K562 (cell line): ENCODE measurements at regions of chr15 and their contacts with region 1.

Region 1: GRCh38 chr15:90054618-90055097 is 47.6 kb downstream of the IDH2 start:
- DNase-seq: no peak
- ATAC-seq: no peak
- H3K4me3 ChIP-seq: no peak overlapping the region
- H3K27ac ChIP-seq: no peak overlapping the region
- H3K4me1 ChIP-seq: peaks cover 22 to 24% of the 10 kb centered on the region in 2 experiments
- H3K27me3 ChIP-seq: no peaks in the 10 kb centered on the region
- CTCF ChIP-seq: no peak
- EP300 ChIP-seq: no peak
- POLR2A ChIP-seq: no peak
- RAD21 ChIP-seq: no peak

Region 2: GRCh38 chr15:89812011-89812835 is 242.4 kb before region 1 on chr15:
- CTCF ChIA-PET with region 1: no interaction called
- POLR2A ChIA-PET with region 1: no interaction called
- in situ Hi-C with region 1: no loop called
- intact Hi-C with region 1: no loop called
- DNase-seq: no peak
- ATAC-seq: peak; percentile 9
- H3K4me3 ChIP-seq: no peak overlapping the region
- H3K27ac ChIP-seq: no peak overlapping the region
- H3K4me1 ChIP-seq: peaks cover 0 to 43% of the 10 kb centered on the region in 2 experiments; a peak in 3 of 5 replicates
- H3K27me3 ChIP-seq: no peaks in the 10 kb centered on the region
- CTCF ChIP-seq: no peak
- EP300 ChIP-seq: no peak
- POLR2A ChIP-seq: no peak
- RAD21 ChIP-seq: no peak

Region 3: GRCh38 chr15:90013503-90013937 is 41.1 kb before region 1 on chr15:
- CTCF ChIA-PET with region 1: no interaction called
- POLR2A ChIA-PET with region 1: no interaction called
- in situ Hi-C with region 1: no loop called
- intact Hi-C with region 1: loop called (anchors 5 kb)
- DNase-seq: no peak
- ATAC-seq: no peak
- H3K4me3 ChIP-seq: no peak overlapping the region
- H3K27ac ChIP-seq: no peak overlapping the region
- H3K4me1 ChIP-seq: no peaks in the 10 kb centered on the region
- H3K27me3 ChIP-seq: no peaks in the 10 kb centered on the region
- CTCF ChIP-seq: no peak
- EP300 ChIP-seq: no peak
- POLR2A ChIP-seq: no peak
- RAD21 ChIP-seq: no peak

Region 4: DNA sequence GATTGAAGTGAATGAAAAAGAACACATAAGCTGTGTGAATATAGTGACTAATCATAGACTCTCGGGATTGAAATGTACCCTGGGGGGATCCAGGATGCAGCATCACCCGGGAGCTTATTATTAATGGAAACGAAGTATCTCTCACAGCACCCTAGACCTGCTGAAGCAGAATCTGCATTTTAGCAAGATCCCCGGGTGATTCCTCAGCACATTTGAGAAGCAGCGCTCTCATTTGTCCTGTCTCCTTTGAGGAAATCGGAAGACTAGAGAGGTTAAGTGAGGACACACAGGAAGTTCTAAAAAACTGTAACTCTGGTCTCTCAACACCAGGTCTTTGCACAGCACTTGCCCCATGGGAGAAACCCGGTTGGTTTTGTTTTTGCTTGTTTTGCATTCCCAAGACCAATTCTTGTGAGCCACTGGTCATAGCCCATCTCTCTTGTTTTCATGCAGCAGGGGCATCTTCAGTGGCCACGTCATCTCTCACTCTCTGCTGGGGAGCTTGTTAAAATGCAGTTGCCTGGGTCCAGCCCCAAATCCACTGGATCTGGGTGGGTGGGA is 23.3 kb before region 1 on chr15:
- CTCF ChIA-PET with region 1: no interaction called
- POLR2A ChIA-PET with region 1: no interaction called
- in situ Hi-C with region 1: no loop called
- intact Hi-C with region 1: no loop called
- DNase-seq: no peak
- ATAC-seq: no peak
- H3K4me3 ChIP-seq: no peak overlapping the region
- H3K27ac ChIP-seq: no peak overlapping the region
- H3K4me1 ChIP-seq: peaks cover 19 to 26% of the 10 kb centered on the region in 2 experiments
- H3K27me3 ChIP-seq: no peaks in the 10 kb centered on the region
- CTCF ChIP-seq: no peak
- EP300 ChIP-seq: no peak
- POLR2A ChIP-seq: no peak
- RAD21 ChIP-seq: no peak